Activated CD4-positive, alpha-beta T cell treated with anti-CD3 and anti-CD28 coated beads for 36 hours (primary cell): ENCODE measurements at regions of chr19 and their contacts with region 1.

Region 1: DNA sequence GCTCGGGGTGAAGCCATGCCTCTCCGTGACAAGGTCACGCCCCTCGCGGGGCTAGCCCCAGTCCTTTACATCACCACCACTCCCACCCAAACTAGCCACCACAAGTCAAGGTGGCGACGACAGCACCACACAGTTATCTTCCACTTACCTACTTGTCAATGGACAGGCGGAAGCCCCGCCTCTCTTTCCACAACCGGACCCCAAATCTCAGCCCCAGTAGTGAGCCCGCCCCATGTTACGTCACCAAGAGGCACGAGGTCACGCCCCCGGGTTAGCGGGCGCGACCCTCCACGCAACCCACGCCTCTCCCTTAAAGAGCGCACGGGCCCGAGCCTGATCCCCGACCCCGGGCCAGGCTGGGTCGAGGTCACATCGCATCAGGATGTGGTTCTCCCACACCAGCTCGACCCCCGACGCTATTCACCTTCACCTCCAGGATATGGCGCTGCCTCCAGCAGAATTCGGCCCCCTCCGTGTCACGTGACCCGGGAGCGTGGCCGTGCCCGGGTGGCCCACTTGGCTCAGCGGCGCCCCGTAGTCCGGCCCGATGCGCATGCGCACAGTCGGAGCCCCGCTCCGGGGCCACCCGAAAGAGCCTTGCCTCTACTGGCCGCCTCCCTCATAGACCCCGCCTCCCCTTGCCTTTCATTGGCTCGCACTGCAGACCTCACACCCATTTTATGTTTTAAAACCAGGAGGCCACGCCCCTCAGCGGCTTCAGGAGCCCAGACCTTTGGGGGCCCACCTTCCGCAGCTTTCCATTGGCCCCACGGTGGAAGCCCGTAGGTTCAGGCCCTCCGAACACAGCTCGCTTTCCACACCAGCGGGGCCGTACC is 18.2 kb downstream of the SYDE1 start:
- DNase-seq: peak; percentile 99
- ATAC-seq: peak; percentile 91
- H3K4me3 Mint-ChIP-seq: peak overlapping the region; percentile 87
- H3K27ac Mint-ChIP-seq: peak overlapping the region; percentile 96
- H3K4me1 Mint-ChIP-seq: peaks cover 32% of the 10 kb centered on the region
- H3K27me3 Mint-ChIP-seq: no peaks in the 10 kb centered on the region

Region 2: DNA sequence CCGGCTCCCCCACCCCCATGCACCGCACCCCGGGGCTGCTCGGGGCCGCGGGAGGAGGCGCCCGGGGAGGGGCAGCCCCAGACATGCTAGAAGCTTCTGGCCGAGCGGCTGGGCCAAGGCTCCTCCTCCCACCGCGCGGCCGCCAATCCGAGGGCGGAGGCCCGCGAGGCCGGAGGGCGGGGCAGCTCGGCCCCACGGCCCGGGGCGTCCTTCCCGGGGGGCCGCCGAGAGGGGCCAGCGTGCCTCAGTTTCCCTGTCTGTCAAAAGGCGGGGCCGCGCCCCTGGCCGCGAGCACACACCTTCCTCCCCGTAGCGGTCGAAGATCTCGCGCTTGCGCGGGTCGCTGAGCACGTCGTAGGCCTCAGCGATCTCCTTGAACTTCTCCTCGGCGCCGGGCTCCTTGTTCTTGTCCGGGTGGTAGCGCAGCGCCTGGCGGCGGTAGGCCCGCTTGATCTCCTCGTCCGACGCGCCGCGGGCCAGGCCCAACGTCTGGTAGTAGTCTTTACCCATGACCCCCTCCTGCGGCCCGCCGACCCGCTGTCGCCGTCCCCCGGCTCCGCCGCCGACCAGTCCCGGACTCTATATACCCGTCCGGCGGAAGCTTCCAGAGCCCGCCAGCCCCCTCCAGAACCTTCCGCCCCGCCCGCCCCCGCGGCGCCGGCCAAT is 607.5 kb before region 1 on chr19 and contains the start of gene DNAJB1:
- CTCF ChIA-PET with region 1: no interaction called
- POLR2A ChIA-PET with region 1: no interaction called
- intact Hi-C with region 1: loop called in 1 of 2 experiments (anchors 1 kb)
- DNase-seq: peak; percentile 81
- ATAC-seq: peak; percentile 56
- H3K4me3 Mint-ChIP-seq: peak within 1 kb of the TSS; percentile 94
- H3K27ac Mint-ChIP-seq: peak within 1 kb of the TSS; percentile 94
- H3K4me1 Mint-ChIP-seq: peaks cover 60% of the 10 kb centered on the region
- H3K27me3 Mint-ChIP-seq: no peaks in the 10 kb centered on the region
- total RNA-seq, gene DNAJB1: 69.3 to 72.6 TPM

Region 3: GRCh38 chr19:15091901-15092753 is 33.3 kb before region 1 on chr19:
- CTCF ChIA-PET with region 1: interaction called, 3 read pairs
- POLR2A ChIA-PET with region 1: interaction called, 3 read pairs
- intact Hi-C with region 1: loop called in 1 of 2 experiments (anchors 2 kb)
- DNase-seq: peak; percentile 60
- ATAC-seq: peak; percentile 63
- H3K4me3 Mint-ChIP-seq: no peak overlapping the region
- H3K27ac Mint-ChIP-seq: no peak overlapping the region
- H3K4me1 Mint-ChIP-seq: peaks cover 5% of the 10 kb centered on the region
- H3K27me3 Mint-ChIP-seq: peaks cover 8% of the 10 kb centered on the region

Region 4: GRCh38 chr19:15222738-15223648 is 97.5 kb after region 1 on chr19:
- CTCF ChIA-PET with region 1: no interaction called
- POLR2A ChIA-PET with region 1: no interaction called
- intact Hi-C with region 1: loop called in 1 of 2 experiments (anchors 1 kb)
- DNase-seq: peak; percentile 88
- ATAC-seq: peak; percentile 99
- H3K4me3 Mint-ChIP-seq: peak overlapping the region; percentile 71
- H3K27ac Mint-ChIP-seq: no peak overlapping the region
- H3K4me1 Mint-ChIP-seq: peaks cover 15% of the 10 kb centered on the region
- H3K27me3 Mint-ChIP-seq: peaks cover 18% of the 10 kb centered on the region

Region 5: GRCh38 chr19:15418588-15419412 is 293.4 kb after region 1 on chr19 and contains the start of gene AKAP8L:
- CTCF ChIA-PET with region 1: no interaction called
- POLR2A ChIA-PET with region 1: interaction called, 3 read pairs
- intact Hi-C with region 1: loop called (anchors 1 kb)
- DNase-seq: peak; percentile 99
- ATAC-seq: peak; percentile 98
- H3K4me3 Mint-ChIP-seq: peak within 1 kb of the TSS; percentile 98
- H3K27ac Mint-ChIP-seq: peak within 1 kb of the TSS; percentile 98
- H3K4me1 Mint-ChIP-seq: peaks cover 37% of the 10 kb centered on the region
- H3K27me3 Mint-ChIP-seq: no peaks in the 10 kb centered on the region
- total RNA-seq, gene AKAP8L: 76.2 to 89.9 TPM

Region 6: DNA sequence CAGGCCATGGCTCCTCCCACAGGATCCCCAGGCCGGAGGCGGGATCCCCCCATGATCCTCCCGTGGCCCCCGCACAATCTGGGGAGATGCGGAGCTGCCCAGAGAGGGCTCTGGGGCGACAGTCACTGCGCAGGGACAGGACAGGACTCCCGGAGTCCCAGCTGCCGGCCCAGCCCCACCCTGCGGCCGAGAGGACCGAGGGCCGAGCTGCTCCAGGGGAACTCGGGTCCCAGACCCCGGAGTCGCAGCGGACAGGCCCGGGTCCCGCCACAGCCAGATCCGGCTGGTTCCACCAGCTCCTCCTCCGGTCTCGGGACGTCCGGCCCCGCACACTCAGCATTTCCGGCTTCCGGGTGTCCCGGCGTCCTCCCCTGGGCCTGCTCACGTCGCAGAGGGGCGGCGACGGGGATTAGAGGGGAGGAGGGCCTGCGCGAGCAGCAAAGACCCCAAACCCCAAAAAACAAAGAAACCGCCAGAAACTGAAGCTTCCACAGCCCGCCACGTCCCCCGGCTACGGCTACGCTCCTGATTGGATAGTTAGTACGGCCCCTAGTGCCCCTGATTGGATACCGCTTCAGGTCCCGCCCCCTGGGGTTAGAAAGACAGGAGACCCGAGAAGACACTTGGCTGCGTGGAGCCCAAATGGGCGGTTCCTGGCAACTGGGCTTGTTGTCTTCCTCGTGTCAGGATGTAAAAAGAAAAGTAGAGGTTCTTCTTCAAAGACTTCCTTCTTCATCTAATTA is 711.3 kb after region 1 on chr19:
- CTCF ChIA-PET with region 1: no interaction called
- POLR2A ChIA-PET with region 1: no interaction called
- intact Hi-C with region 1: loop called (anchors 1 to 2 kb)
- DNase-seq: peak; percentile 96
- ATAC-seq: peak; percentile 96
- H3K4me3 Mint-ChIP-seq: peak overlapping the region; percentile 85
- H3K27ac Mint-ChIP-seq: peak overlapping the region; percentile 98
- H3K4me1 Mint-ChIP-seq: peaks cover 15% of the 10 kb centered on the region
- H3K27me3 Mint-ChIP-seq: no peaks in the 10 kb centered on the region